Right ventricle myocardium inferior (tissue), 1 donor: ENCODE measurements at regions of chr17 and their contacts with region 1.

Region 1: DNA sequence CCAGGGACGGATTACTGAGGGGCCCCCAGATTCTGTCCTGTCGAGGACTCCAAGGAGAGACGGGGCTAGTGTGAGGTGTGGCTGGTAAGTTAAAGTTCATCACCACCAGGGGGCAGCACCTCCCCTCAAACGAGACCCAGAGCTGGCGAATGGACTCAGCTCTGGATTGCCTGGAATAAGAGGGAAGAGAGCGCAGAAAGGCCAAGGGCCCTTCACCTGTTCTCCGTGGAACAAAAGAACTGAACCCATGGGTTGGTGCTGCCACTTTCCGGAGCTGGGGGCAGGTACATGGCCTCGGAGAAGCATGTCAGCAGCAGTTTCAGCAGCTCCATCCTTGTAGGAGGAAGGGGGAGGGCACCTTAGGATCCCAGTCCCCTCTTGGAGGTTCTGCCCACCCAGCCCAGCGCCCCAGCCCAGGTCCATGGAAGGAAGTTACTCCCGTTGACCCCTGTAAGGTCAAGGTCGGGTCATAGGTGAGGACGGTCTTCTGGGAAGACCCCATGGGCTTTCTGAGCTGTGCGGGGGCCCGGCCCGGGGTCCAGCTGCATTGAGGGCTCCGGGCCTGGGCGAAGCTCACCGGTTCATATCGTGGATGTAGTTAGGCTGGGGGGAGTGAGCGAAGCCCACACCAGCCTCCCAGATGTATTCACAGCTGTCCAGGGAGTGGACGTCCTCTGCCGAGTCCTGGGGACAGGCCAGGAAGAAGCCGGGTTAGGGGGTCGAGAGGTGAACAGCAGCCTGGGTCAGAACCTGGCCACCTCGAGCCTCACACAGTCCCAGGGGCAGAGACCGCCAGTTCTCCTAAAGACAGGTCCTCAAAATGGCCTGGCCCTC is 10.7 kb downstream of the HID1 start:
- DNase-seq: peak; percentile 89
- ATAC-seq: peak; percentile 82

Region 2: GRCh38 chr17:74744714-74745547 is 216.9 kb before region 1 on chr17:
- intact Hi-C with region 1: loop called (anchors 5 kb)
- DNase-seq: peak; percentile 94
- ATAC-seq: peak; percentile 36

Region 3: GRCh38 chr17:74790161-74791054 is 171.5 kb before region 1 on chr17:
- intact Hi-C with region 1: loop called (anchors 5 kb)
- DNase-seq: no peak
- ATAC-seq: no peak

Region 4: GRCh38 chr17:75012346-75013091 is 50.6 kb after region 1 on chr17 and contains the start of gene MRPL58:
- intact Hi-C with region 1: loop called (anchors 2 kb)
- DNase-seq: peak; percentile 93
- ATAC-seq: peak; percentile 87
- total RNA-seq, gene MRPL58: 51.4 TPM

Region 5: GRCh38 chr17:75033346-75034235 is 71.7 kb after region 1 on chr17:
- intact Hi-C with region 1: loop called (anchors 1 kb)
- DNase-seq: peak; percentile 91
- ATAC-seq: peak; percentile 66

Region 6: DNA sequence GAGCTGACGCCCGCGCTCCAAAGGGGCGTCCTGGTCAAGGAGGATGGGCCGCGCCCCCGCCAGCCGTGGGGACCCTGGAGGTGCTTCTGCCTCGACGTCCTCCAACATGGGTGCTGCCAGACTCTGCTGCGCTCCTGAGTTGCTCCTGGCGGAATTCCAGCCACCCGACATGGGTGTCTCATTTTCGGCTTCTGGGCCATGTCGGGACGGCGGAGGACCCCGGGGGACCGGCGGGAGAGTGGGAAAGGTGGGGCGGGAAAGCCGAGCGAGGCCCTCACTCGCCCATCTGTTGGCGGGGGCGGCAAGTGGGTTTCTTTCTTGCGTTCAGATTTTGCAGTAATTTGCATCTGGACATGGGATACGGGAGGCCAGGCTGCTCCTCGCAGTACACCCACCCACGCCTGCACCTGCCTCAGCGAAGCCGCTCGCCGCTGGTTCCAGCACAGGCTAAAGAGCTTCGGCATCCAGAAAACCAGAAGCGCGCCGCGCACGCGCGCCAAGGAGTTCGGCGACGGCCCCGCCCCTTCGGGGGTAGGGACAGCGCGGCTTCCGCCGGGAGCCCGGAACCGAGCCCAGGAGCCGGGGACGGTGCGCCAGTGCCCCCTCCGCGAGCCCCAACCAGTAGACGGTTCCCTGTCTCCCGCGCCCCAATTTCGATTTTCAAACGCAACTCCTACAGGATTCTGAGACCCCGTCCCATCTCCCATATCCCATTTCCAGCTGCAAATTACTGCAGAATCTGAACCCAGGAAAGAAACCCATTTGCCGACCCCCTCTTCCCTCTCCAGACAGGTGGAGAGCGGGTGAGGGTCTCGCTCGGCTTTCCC is 147.7 kb after region 1 on chr17 and contains the start of gene ARMC7:
- intact Hi-C with region 1: loop called (anchors 5 kb)
- DNase-seq: peak; percentile 95
- ATAC-seq: peak; percentile 92
- total RNA-seq, gene ARMC7: 6.4 TPM

Region 7: DNA sequence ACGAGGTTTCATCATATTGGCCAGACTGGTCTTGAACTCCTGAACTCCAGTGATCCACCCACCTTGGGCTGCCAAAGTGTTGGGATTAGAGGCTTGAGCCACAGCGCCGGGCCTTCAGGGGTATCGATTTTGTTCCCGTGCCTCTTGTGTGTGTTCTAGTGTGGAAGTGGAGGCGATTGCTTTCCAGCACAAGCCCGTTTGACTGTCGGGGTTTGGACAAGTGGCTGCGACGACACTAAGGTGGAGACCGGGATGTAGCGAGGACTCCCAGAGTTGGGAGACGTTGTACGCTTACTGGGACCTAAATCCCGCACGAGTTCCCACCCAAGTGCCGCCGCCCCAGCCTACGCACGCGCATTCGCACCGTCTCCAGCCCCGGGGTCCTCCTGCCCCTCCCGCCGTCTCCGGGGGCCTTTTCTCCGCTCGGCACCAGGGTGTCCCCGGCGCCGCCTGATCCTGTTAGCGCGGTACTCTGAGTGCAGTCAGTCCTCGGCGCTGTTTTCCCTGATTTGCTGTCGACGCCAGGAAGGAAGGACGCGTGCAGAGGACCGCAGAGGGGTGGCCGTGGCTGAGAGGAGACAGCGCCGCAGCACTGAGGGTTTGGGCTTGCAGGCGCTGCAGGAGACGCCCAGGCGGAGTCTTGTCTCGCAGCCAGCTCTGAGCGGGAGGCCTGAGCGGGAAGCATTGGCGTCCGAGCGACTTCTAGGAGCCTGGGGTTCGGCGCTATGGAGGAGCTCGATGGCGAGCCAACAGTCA is 243.3 kb after region 1 on chr17 and contains the start of gene NUP85:
- intact Hi-C with region 1: loop called (anchors 2 kb)
- DNase-seq: peak; percentile 95
- ATAC-seq: peak; percentile 97
- total RNA-seq, gene NUP85: 28.7 TPM